ENCODE measurements at regions of chr6 and their contacts with region 1.

Region 1: GRCh38 chr6:44161997-44162338 is 3.3 kb downstream of the CAPN11 start:
- DNase-seq: no peak
- ATAC-seq: peak in 1 of 2 experiments; percentile 19; a peak in 2 of 6 replicates
- H3K4me3 ChIP-seq: no peak overlapping the region
- H3K27ac ChIP-seq: no peak overlapping the region
- H3K4me1 ChIP-seq: no peaks in the 10 kb centered on the region
- CTCF ChIP-seq: no peak
- EP300 ChIP-seq: no peak
- POLR2A ChIP-seq: no peak
- RAD21 ChIP-seq: no peak

Region 2: DNA sequence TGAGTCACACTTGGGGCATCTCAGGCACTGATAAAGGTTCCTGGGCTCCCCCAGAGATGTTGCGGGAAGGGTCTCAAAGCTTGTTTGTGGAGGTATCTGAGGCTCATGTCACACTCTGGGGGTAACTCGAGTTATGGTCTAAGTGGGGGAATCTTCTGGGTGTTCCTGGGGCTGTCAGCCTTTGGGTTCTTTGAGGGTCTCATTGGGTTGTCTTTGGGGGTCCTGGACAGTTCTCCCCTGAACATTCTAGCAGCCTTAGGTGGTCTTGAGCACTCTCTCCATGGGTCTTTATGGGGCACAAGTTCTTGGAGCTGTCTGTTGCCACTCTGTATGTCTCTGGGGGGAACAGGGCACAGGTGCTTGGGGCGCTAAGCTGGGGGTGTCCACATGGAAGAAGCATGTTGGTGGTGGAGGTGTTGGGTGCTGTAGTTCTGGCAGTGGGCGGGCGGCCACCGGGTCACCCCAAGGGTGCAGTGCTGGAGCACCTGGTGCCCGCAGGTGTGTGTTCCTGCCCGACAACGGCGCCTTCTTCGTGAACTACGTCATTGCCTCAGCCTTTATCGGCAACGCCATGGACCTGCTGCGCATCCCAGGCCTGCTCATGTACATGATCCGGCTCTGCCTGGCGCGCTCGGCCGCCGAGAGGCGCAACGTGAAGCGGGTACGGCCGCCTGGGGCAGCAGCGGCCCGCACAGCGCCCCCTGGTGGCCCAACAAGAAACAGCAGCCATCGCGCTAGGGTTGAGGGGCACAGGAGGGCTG is 10.4 kb before region 1 on chr6:
- CTCF ChIA-PET with region 1: interaction called, 11 read pairs
- POLR2A ChIA-PET with region 1: no interaction called
- DNase-seq: peak; percentile 61 to 71
- ATAC-seq: peak; percentile 77 to 93
- H3K4me3 ChIP-seq: no peak overlapping the region
- H3K27ac ChIP-seq: no peak overlapping the region
- H3K4me1 ChIP-seq: no peaks in the 10 kb centered on the region
- CTCF ChIP-seq: peak; percentile 89
- EP300 ChIP-seq: no peak
- POLR2A ChIP-seq: no peak
- RAD21 ChIP-seq: peak; percentile 55 to 62